Ascending aorta (tissue), 2 donors: ENCODE measurements at regions of chr3 and their contacts with region 1.

Region 1: GRCh38 chr3:44712455-44713075 is at the start of gene ZNF502:
- DNase-seq: peak; percentile 21 to 90
- H3K4me3 ChIP-seq: peak within 1 kb of the TSS; percentile 63 to 87
- H3K27ac ChIP-seq: peak within 1 kb of the TSS; percentile 65 to 67
- H3K4me1 ChIP-seq: no peaks in the 10 kb centered on the region
- H3K27me3 ChIP-seq: no peaks in the 10 kb centered on the region
- CTCF ChIP-seq: peak in 2 of 3 experiments; percentile 22 to 32
- total RNA-seq, gene ZNF502: 6.5 TPM

Region 2: DNA sequence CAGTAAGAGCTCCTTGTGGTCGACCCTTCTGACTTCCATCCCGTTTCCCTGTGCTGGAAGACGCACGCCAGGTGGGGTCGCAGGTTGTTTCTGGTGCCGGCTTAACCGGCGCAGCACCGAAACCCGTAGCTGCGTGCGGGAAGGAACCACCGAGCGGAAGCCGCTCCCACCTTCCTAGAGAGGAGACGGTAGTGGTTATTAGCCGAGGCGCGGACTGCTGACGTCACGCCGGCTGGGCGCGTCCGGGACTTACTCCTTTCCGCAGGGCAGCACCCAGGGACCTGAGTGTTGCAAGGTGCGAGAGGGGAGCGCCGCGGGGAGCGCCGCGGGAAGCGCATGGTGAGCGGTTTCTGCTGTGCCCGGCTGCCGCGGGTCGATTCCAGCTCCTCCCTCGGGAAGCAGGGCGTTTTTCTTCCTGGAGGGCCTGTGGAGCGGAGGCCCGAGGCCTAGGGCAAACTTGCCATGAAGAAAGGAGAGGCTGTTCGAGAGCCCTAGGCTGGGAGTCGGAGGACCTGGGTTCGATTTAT is 16.9 kb after region 1 on chr3 and contains the start of gene ZNF501:
- intact Hi-C with region 1: loop called (anchors 1 kb)
- DNase-seq: peak; percentile 63 to 96
- H3K4me3 ChIP-seq: peak within 1 kb of the TSS; percentile 55 to 69
- H3K27ac ChIP-seq: peak within 1 kb of the TSS; percentile 29 to 47
- H3K4me1 ChIP-seq: no peaks in the 10 kb centered on the region
- H3K27me3 ChIP-seq: no peaks in the 10 kb centered on the region
- CTCF ChIP-seq: no peak
- total RNA-seq, gene ZNF501: not detected